Heart right ventricle (tissue), 16 donors: ENCODE measurements at regions of chr11 and their contacts with region 1.

Region 1: DNA sequence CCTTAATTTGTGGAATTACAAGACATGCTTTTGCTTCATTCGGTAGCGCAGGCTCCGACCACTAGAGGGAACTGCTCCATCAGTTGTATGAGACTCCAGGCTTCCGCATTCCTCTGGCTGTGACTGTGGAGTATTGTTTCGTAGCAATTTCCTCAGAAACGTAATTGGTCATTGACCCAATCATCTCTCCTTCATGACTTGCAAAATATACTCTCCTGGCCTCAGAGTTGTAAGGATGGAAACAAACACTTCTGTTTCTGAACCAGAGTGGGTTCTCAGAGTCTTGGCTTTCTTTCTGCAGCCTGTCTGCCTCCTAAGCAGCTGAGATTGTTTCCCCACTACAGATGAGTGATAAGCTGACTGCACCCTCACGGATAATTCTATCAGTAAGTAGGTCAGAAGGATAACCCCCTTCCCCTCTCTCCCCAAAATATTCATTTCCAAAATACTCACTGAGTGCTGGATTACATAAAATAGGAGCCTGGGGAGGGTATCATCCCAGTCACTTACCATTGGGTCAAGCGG is 146.8 kb upstream of the ZC3H12C start:
- DNase-seq: peak; percentile 74 to 88
- ATAC-seq: peak; percentile 90 to 100 (median 98)
- H3K4me3 ChIP-seq: peak overlapping the region in 8 of 10 donors; percentile 11 to 42 (median 35)
- H3K27ac ChIP-seq: peak overlapping the region in 9 of 10 donors; percentile 34 to 77 (median 52)
- H3K4me1 ChIP-seq: peaks cover 0 to 9% (median 4%) of the 10 kb centered on the region in 9 donors
- H3K27me3 ChIP-seq: no peaks in the 10 kb centered on the region
- CTCF ChIP-seq: peak; percentile 75 to 95 (median 92)

Region 2: GRCh38 chr11:110160016-110160415 is 213.6 kb after region 1 on chr11:
- intact Hi-C with region 1: loop called in 2 of 10 experiments (anchors 10 kb)
- DNase-seq: no peak
- ATAC-seq: peak in 1 of 8 donors; percentile 40
- H3K4me3 ChIP-seq: no peak overlapping the region
- H3K27ac ChIP-seq: no peak overlapping the region
- H3K4me1 ChIP-seq: peaks cover 0 to 5% (median 0%) of the 10 kb centered on the region in 9 donors
- H3K27me3 ChIP-seq: no peaks in the 10 kb centered on the region
- CTCF ChIP-seq: no peak

Region 3: DNA sequence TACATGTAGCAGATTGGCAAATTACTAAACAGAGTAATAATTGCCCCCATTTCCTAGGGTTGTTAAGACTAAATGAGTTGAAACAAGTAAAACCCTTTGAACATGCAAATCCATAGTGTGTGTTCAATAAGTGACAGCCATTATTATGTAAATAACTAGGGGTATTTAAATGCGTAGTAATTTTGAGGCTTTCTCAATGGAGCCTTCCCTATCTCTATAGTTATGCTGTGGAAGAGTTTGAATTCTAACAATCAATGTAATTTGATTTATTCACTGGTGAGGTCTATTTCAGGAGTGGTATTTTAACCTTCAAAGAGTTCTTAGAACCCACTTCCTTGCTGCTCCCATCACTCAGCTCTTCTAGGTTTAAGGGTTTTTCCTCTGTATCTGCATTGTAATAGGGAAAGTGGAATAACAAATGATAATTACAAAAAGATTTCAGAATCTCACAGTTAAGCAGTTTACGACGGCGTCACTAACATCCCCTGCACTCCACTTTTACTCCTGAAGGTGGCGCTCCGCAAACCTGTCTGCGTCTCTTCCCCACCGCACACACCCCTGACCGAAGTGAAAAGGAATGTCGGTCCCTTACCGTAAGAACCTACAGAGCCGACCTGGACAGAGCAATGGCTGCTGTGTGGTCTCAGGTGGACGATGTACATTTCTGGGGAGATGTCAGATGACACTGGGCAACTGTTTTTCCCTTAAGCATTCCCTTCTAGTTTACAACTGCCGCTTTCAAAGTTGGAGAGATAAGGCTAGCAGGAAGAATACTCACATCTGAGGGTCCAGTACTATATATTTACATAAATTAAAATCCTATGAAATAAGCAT is 227.6 kb after region 1 on chr11:
- intact Hi-C with region 1: loop called in 5 of 10 experiments (anchors 10 kb)
- DNase-seq: peak; percentile 52 to 57
- ATAC-seq: peak; percentile 31 to 86 (median 78)
- H3K4me3 ChIP-seq: peak overlapping the region in 6 of 10 donors; percentile 15 to 39 (median 34)
- H3K27ac ChIP-seq: no peak overlapping the region
- H3K4me1 ChIP-seq: peaks cover 0 to 16% (median 8%) of the 10 kb centered on the region in 9 donors
- H3K27me3 ChIP-seq: no peaks in the 10 kb centered on the region
- CTCF ChIP-seq: peak; percentile 55 to 85 (median 78)

Region 4: DNA sequence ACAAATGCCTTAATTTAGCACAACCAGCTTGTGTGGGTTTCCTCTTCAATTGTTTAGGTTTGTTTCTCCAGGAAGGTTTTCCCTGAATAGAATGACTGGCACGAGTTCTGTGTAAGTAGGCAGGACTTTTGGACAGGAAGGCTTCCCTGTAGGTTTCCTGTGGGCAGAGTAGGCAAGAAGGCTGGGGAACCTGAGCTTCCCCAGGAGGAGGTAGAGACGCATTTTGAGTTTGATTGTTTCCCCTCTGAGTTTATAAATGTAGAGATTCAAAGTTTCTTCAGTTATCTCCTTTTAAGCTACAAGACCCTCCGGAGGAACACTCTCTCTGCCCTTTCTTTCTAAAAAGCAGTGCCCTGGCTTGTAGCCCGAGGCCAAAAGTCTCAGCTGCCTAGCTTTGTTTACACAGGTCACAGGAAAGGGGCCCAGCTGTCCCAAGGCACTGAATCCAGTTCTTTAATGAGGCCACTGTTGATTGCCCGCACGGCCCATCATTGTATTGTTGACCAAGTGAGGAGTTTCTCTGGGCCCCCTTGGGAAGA is 416.7 kb after region 1 on chr11:
- intact Hi-C with region 1: loop called in 3 of 10 experiments (anchors 5 to 10 kb)
- DNase-seq: peak in 1 of 2 donors; percentile 20
- ATAC-seq: peak in 7 of 8 donors; percentile 46 to 79 (median 75)
- H3K4me3 ChIP-seq: no peak overlapping the region
- H3K27ac ChIP-seq: peak overlapping the region in 9 of 10 donors; percentile 29 to 72 (median 47)
- H3K4me1 ChIP-seq: peaks cover 0 to 44% (median 24%) of the 10 kb centered on the region in 9 donors
- H3K27me3 ChIP-seq: no peaks in the 10 kb centered on the region
- CTCF ChIP-seq: no peak

Region 5: DNA sequence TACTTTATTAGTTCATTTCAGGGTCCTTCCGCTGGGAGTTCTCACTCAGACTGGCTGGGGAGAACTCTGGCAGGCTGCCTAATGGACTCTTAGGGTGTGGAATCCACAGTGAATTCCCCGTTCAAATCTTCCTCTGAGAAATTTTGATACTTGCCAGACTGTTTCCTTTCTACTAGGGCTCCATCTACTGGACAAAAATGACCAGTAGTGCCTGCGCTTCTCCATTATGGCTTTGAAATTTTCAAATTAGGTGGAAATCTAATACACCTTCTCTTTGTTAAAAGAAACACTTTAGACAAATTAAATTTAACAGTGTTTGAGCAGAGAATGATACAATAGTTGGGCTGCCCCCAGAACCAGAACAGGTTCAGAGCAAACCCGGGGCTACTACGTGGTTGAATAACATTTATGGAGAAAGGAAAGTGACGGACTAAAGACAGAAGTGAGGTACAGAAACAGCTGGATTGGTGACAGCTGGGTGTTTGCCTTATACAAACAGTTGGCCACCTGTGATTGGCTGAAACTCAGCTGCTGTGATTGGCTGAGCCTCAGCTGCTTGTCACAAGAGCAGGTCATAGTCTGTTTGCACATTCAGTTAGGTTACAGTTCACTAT is 430.4 kb after region 1 on chr11:
- intact Hi-C with region 1: loop called in 6 of 10 experiments (anchors 5 to 10 kb)
- DNase-seq: peak; percentile 51 to 85
- ATAC-seq: peak; percentile 68 to 92 (median 86)
- H3K4me3 ChIP-seq: peak overlapping the region in 4 of 10 donors; percentile 12 to 23 (median 20)
- H3K27ac ChIP-seq: peak overlapping the region in 7 of 10 donors; percentile 2 to 60 (median 34)
- H3K4me1 ChIP-seq: peaks cover 0 to 36% (median 13%) of the 10 kb centered on the region in 9 donors
- H3K27me3 ChIP-seq: no peaks in the 10 kb centered on the region
- CTCF ChIP-seq: peak; percentile 63 to 93 (median 83)